HepG2 (cell line): ENCODE measurements at regions of chr14 and their contacts with region 1.

Region 1: DNA sequence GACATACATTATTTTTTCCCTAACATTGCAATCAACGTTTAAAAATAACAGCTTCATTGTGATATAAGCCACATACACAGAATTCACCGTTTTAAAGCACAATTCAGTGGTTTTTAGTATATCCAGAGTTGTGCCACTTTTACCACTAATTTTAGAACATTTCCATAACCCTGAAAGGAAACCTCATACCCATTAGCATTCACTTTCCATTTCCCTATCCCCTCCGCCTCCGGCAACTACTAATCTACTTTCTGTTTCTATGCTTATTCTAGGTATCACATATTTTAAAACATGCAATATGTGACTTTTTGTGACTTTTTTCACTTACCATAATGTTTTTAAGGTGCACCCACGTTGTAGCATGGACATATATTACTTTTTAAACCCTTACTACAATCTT is 55.6 kb upstream of the ISM2 start:
- DNase-seq: no peak
- ATAC-seq: no peak
- H3K4me3 ChIP-seq: no peak overlapping the region
- H3K27ac ChIP-seq: no peak overlapping the region
- H3K4me1 ChIP-seq: no peaks in the 10 kb centered on the region
- H3K27me3 ChIP-seq: no peaks in the 10 kb centered on the region
- CTCF ChIP-seq: no peak
- EP300 ChIP-seq: no peak
- POLR2A ChIP-seq: no peak
- RAD21 ChIP-seq: no peak

Region 2: GRCh38 chr14:77314043-77314442 is 240.2 kb before region 1 on chr14:
- CTCF ChIA-PET with region 1: no interaction called
- POLR2A ChIA-PET with region 1: no interaction called
- in situ Hi-C with region 1: loop called (anchors 10 kb)
- intact Hi-C with region 1: loop called (anchors 5 kb)
- DNase-seq: no peak
- ATAC-seq: no peak
- H3K4me3 ChIP-seq: no peak overlapping the region
- H3K27ac ChIP-seq: no peak overlapping the region
- H3K4me1 ChIP-seq: peaks cover 65% of the 10 kb centered on the region
- H3K27me3 ChIP-seq: no peaks in the 10 kb centered on the region
- CTCF ChIP-seq: no peak
- EP300 ChIP-seq: no peak
- POLR2A ChIP-seq: no peak
- RAD21 ChIP-seq: no peak

Region 3: GRCh38 chr14:77495334-77495733 is 58.9 kb before region 1 on chr14:
- CTCF ChIA-PET with region 1: no interaction called
- POLR2A ChIA-PET with region 1: no interaction called
- in situ Hi-C with region 1: no loop called
- intact Hi-C with region 1: no loop called
- DNase-seq: no peak
- ATAC-seq: no peak
- H3K4me3 ChIP-seq: no peak overlapping the region
- H3K27ac ChIP-seq: no peak overlapping the region
- H3K4me1 ChIP-seq: peaks cover 30% of the 10 kb centered on the region
- H3K27me3 ChIP-seq: no peaks in the 10 kb centered on the region; a peak in 1 of 5 replicates
- CTCF ChIP-seq: no peak
- EP300 ChIP-seq: no peak
- POLR2A ChIP-seq: no peak
- RAD21 ChIP-seq: no peak

Region 4: DNA sequence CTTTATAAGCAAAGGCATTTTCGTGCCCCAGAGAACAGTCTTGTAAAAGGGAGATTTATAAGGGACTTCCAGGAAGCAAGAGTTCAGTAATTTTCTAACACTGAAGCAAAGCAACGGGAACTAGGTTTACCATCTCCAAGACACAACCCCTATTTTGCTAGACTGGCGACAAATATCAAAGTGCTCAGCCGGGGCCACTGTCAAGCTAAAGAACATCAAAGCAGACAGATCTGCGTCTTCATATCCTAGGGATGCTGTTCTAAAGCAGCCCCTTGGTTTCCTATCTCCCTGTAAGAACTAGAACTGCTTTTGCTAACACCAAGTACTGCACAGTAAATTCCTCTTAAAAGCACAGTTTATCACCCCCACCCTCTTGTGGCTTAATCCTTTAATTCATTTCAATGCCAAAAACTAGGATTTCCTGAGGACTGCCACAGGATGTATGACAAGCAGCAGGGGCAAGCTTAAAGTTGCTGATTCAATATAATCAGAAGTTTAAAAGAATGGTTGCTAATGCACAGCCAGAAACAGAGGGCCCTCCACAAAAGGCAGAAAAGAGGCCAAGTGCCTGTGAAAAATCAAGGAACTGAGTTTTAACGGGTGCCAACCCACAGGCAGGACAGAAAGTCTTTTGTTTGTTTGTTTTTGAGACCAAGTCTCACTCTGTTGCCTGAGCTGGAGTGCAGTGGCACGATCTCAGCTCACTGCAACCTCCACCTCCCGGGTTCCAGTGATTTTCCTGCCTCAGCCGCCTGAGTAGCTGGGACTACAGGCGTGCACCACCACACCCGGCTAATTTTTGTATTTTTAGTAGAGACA is 11.6 kb before region 1 on chr14:
- CTCF ChIA-PET with region 1: no interaction called
- POLR2A ChIA-PET with region 1: no interaction called
- in situ Hi-C with region 1: no loop called
- intact Hi-C with region 1: no loop called
- DNase-seq: no peak
- ATAC-seq: no peak; the same call in 2 of the 3 replicates
- H3K4me3 ChIP-seq: no peak overlapping the region
- H3K27ac ChIP-seq: no peak overlapping the region
- H3K4me1 ChIP-seq: peaks cover 14% of the 10 kb centered on the region
- H3K27me3 ChIP-seq: no peaks in the 10 kb centered on the region
- CTCF ChIP-seq: no peak
- EP300 ChIP-seq: no peak
- POLR2A ChIP-seq: no peak
- RAD21 ChIP-seq: no peak

Region 5: GRCh38 chr14:77580964-77581505 is 26.8 kb after region 1 on chr14:
- CTCF ChIA-PET with region 1: no interaction called
- POLR2A ChIA-PET with region 1: no interaction called
- in situ Hi-C with region 1: no loop called
- intact Hi-C with region 1: no loop called
- DNase-seq: no peak
- ATAC-seq: no peak
- H3K4me3 ChIP-seq: no peak overlapping the region
- H3K27ac ChIP-seq: no peak overlapping the region
- H3K4me1 ChIP-seq: peaks cover 9% of the 10 kb centered on the region
- H3K27me3 ChIP-seq: no peaks in the 10 kb centered on the region
- CTCF ChIP-seq: no peak
- EP300 ChIP-seq: no peak
- POLR2A ChIP-seq: no peak
- RAD21 ChIP-seq: no peak

Region 6: GRCh38 chr14:77903221-77903620 is 349.0 kb after region 1 on chr14:
- CTCF ChIA-PET with region 1: no interaction called
- POLR2A ChIA-PET with region 1: no interaction called
- in situ Hi-C with region 1: no loop called
- intact Hi-C with region 1: no loop called
- DNase-seq: no peak
- ATAC-seq: no peak
- H3K4me3 ChIP-seq: no peak overlapping the region
- H3K27ac ChIP-seq: no peak overlapping the region
- H3K4me1 ChIP-seq: no peaks in the 10 kb centered on the region
- H3K27me3 ChIP-seq: no peaks in the 10 kb centered on the region
- CTCF ChIP-seq: no peak
- EP300 ChIP-seq: no peak
- POLR2A ChIP-seq: no peak
- RAD21 ChIP-seq: no peak